Upper lobe of right lung (tissue), 1 donor: ENCODE measurements at regions of chr4 and their contacts with region 1.

Region 1: GRCh38 chr4:81466841-81467671 is 4.7 kb downstream of the RASGEF1B start:
- DNase-seq: no peak
- ATAC-seq: no peak
- H3K4me3 ChIP-seq: no peak overlapping the region
- H3K27ac ChIP-seq: no peak overlapping the region
- H3K4me1 ChIP-seq: peaks cover 42% of the 10 kb centered on the region
- H3K27me3 ChIP-seq: no peaks in the 10 kb centered on the region
- CTCF ChIP-seq: peak; percentile 96

Region 2: DNA sequence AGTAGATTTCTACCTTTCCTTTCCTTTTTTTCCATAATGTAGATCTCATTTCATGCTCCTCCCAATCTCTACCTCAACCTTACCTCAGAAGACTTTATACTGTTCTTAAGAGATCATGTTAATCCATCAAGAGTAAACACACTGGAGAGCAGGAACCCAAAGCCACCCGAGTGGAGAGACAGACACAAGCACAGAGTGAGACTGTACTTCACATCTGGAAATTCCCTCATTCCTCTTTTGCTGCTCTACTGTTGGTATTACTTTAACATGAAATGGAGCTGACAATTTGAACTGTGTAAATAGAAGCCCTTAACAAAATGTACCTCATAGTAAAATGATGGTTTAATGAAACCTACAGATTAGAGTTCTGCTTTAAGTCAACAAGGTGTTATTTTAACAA is 110.3 kb after region 1 on chr4:
- intact Hi-C with region 1: no loop called
- DNase-seq: no peak
- ATAC-seq: peak; percentile 39
- H3K4me3 ChIP-seq: no peak overlapping the region
- H3K27ac ChIP-seq: no peak overlapping the region
- H3K4me1 ChIP-seq: no peaks in the 10 kb centered on the region
- H3K27me3 ChIP-seq: no peaks in the 10 kb centered on the region
- CTCF ChIP-seq: no peak

Region 3: GRCh38 chr4:81594490-81595159 is 127.6 kb after region 1 on chr4:
- intact Hi-C with region 1: no loop called
- DNase-seq: no peak
- ATAC-seq: no peak
- H3K4me3 ChIP-seq: no peak overlapping the region
- H3K27ac ChIP-seq: no peak overlapping the region
- H3K4me1 ChIP-seq: peaks cover 15% of the 10 kb centered on the region
- H3K27me3 ChIP-seq: no peaks in the 10 kb centered on the region
- CTCF ChIP-seq: no peak

Region 4: DNA sequence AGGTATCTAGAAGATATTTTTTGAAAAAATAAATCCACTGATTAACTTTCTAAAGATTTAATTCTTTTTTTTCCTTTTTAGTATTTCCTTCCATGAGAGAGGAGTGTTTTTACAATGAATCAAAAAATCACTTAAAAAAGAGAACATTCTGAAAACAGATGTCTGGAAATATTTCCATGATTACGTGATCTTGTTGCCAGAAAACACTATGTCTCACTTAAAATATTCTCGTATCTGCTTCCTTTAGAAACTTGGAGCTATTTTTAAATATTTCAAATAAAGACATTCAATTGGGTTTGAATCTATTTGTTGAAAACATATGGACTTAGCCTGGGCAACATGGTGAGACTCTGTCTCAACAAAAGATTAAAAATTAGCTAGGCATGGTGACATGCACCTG is 237.4 kb after region 1 on chr4:
- intact Hi-C with region 1: no loop called
- DNase-seq: no peak
- ATAC-seq: no peak
- H3K4me3 ChIP-seq: no peak overlapping the region
- H3K27ac ChIP-seq: no peak overlapping the region
- H3K4me1 ChIP-seq: no peaks in the 10 kb centered on the region
- H3K27me3 ChIP-seq: no peaks in the 10 kb centered on the region
- CTCF ChIP-seq: no peak

Region 5: DNA sequence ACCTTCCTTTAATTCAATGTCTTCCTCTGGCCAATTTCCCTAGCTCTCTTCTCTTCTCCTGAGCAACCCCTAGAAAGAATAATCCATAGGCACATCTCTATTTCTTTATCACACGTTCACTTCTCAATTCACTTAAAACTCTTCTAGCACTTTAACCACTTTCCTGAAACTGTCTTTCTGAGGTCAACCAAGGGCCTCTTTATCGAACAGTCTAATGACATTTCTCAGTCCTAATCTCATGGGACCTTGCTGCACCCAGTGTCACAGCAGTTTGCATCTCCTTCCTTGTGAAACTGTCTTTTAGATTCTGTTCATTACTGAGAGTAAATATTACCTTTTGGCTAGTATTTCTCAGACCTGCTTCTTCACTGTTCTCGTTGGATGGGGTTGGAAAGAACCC is 289.9 kb after region 1 on chr4:
- intact Hi-C with region 1: no loop called
- DNase-seq: no peak
- ATAC-seq: no peak
- H3K4me3 ChIP-seq: no peak overlapping the region
- H3K27ac ChIP-seq: no peak overlapping the region
- H3K4me1 ChIP-seq: no peaks in the 10 kb centered on the region
- H3K27me3 ChIP-seq: no peaks in the 10 kb centered on the region
- CTCF ChIP-seq: no peak

Region 6: DNA sequence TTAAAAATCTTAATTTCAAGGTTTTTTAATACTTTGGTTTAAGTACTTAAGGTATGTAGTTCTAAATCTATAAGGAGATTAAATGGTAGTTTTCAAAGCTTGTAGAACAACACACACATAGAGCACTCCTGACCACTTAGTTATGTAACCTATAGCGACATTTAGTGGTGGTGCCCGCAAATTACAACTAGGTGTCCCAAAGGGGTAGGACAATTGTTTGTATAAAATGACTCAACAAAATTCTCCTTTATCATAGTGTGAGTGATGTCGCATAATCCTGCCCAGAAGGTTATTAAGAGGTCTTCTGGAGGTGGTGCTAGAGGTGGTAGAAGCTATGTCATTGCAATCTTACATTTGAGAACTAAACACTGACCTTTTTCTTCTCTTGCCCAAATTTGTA is 377.7 kb after region 1 on chr4:
- intact Hi-C with region 1: loop called (anchors 5 kb)
- DNase-seq: no peak
- ATAC-seq: peak; percentile 98
- H3K4me3 ChIP-seq: no peak overlapping the region
- H3K27ac ChIP-seq: no peak overlapping the region
- H3K4me1 ChIP-seq: no peaks in the 10 kb centered on the region
- H3K27me3 ChIP-seq: no peaks in the 10 kb centered on the region
- CTCF ChIP-seq: peak; percentile 85